ENCODE measurements at regions of chr12 and their contacts with region 1.

Region 1: GRCh38 chr12:87848248-87848868 is 180.8 kb downstream of the C12orf50 start:
- DNase-seq: peak; percentile 53
- H3K4me3 Mint-ChIP-seq: no peak overlapping the region
- H3K27ac Mint-ChIP-seq: no peak overlapping the region
- H3K4me1 Mint-ChIP-seq: peaks cover 8% of the 10 kb centered on the region
- H3K27me3 Mint-ChIP-seq: no peaks in the 10 kb centered on the region
- CTCF ChIP-seq: peak; percentile 83

Region 2: GRCh38 chr12:86264451-86265342 is 1583.7 kb before region 1 on chr12:
- CTCF ChIA-PET with region 1: no interaction called
- intact Hi-C with region 1: loop called (anchors 5 kb)
- DNase-seq: peak; percentile 79
- H3K4me3 Mint-ChIP-seq: peak overlapping the region; percentile 88
- H3K27ac Mint-ChIP-seq: peak overlapping the region; percentile 71
- H3K4me1 Mint-ChIP-seq: peaks cover 18% of the 10 kb centered on the region
- H3K27me3 Mint-ChIP-seq: no peaks in the 10 kb centered on the region
- CTCF ChIP-seq: no peak

Region 3: GRCh38 chr12:87344699-87345098 is 503.7 kb before region 1 on chr12:
- CTCF ChIA-PET with region 1: no interaction called
- intact Hi-C with region 1: loop called (anchors 2 kb)
- DNase-seq: no peak
- H3K4me3 Mint-ChIP-seq: no peak overlapping the region
- H3K27ac Mint-ChIP-seq: no peak overlapping the region
- H3K4me1 Mint-ChIP-seq: no peaks in the 10 kb centered on the region
- H3K27me3 Mint-ChIP-seq: no peaks in the 10 kb centered on the region
- CTCF ChIP-seq: no peak

Region 4: GRCh38 chr12:87518502-87518901 is 329.9 kb before region 1 on chr12:
- CTCF ChIA-PET with region 1: no interaction called
- intact Hi-C with region 1: loop called (anchors 10 kb)
- DNase-seq: no peak
- H3K4me3 Mint-ChIP-seq: no peak overlapping the region
- H3K27ac Mint-ChIP-seq: no peak overlapping the region
- H3K4me1 Mint-ChIP-seq: no peaks in the 10 kb centered on the region
- H3K27me3 Mint-ChIP-seq: no peaks in the 10 kb centered on the region
- CTCF ChIP-seq: no peak

Region 5: GRCh38 chr12:87687362-87687761 is 161.0 kb before region 1 on chr12:
- CTCF ChIA-PET with region 1: interaction called, 6 read pairs
- intact Hi-C with region 1: loop called (anchors 5 kb)
- DNase-seq: peak; percentile 50
- H3K4me3 Mint-ChIP-seq: no peak overlapping the region
- H3K27ac Mint-ChIP-seq: peak overlapping the region; percentile 66
- H3K4me1 Mint-ChIP-seq: peaks cover 19% of the 10 kb centered on the region
- H3K27me3 Mint-ChIP-seq: no peaks in the 10 kb centered on the region
- CTCF ChIP-seq: no peak

Region 6: DNA sequence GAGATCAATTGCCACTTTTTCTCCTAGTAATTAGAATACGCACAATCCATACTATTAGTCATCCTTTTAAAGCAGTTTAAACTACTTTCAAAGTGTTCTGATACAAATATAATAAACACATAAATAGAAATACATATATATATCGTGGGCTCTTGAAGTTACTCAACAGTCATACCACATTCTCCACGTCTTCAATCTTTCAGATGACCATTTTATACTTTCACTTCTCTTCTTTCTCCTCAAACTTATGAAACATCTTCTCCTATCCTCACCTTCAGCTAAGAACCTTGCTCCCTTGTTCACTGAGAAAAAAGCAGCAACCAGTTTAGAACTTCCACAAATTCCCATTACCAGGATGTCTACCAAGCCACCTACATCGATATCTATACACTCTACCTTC is 274.3 kb after region 1 on chr12:
- CTCF ChIA-PET with region 1: no interaction called
- intact Hi-C with region 1: no loop called
- DNase-seq: no peak
- H3K4me3 Mint-ChIP-seq: no peak overlapping the region
- H3K27ac Mint-ChIP-seq: no peak overlapping the region
- H3K4me1 Mint-ChIP-seq: no peaks in the 10 kb centered on the region
- H3K27me3 Mint-ChIP-seq: no peaks in the 10 kb centered on the region
- CTCF ChIP-seq: no peak

Measured in Calu3 (cell line).